Psoas muscle (tissue), 8 donors: ENCODE measurements at regions of chr15 and their contacts with region 1.

Region 1: GRCh38 chr15:55758580-55758986 is 15.6 kb upstream of the PRTG start:
- DNase-seq: no peak
- ATAC-seq: no peak
- H3K4me3 ChIP-seq: no peak overlapping the region
- H3K27ac ChIP-seq: no peak overlapping the region
- H3K4me1 ChIP-seq: no peaks in the 10 kb centered on the region
- H3K27me3 ChIP-seq: no peaks in the 10 kb centered on the region
- CTCF ChIP-seq: no peak

Region 2: DNA sequence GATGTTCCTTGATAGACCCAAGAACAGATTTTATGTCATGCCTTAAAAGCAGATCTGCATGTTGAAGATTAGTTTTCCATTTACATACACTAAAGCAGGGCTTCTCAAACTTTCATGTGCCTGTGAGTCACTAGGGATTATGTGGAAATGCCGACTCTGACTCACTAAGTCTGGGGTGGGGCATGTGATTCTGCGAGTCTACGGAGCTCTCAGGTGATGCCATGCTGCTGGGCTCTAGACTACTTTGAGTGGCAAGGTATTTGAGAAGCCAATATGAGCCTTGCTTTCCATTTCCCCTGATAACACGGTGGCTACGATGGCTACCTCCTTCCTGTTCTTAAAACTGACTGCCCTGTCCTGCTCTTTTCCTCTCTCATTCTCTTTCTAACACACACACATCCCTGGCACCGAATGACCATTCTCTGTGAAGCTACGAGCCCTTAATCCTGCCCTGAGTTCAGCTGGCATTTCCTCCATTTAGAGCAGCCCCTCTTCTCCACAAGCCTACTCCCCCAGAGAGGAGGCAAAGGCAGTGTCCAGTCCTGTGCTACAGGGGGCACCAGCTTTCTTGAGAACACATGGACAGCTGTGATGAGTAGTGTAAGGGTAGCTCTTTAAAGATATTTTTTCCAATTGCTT is 130.7 kb before region 1 on chr15:
- intact Hi-C with region 1: no loop called
- DNase-seq: peak; percentile 22 to 65
- ATAC-seq: peak; percentile 86 to 95 (median 90)
- H3K4me3 ChIP-seq: peak overlapping the region; percentile 26
- H3K27ac ChIP-seq: peak overlapping the region; percentile 85
- H3K4me1 ChIP-seq: peaks cover 27% of the 10 kb centered on the region
- H3K27me3 ChIP-seq: no peaks in the 10 kb centered on the region
- CTCF ChIP-seq: no peak

Region 3: DNA sequence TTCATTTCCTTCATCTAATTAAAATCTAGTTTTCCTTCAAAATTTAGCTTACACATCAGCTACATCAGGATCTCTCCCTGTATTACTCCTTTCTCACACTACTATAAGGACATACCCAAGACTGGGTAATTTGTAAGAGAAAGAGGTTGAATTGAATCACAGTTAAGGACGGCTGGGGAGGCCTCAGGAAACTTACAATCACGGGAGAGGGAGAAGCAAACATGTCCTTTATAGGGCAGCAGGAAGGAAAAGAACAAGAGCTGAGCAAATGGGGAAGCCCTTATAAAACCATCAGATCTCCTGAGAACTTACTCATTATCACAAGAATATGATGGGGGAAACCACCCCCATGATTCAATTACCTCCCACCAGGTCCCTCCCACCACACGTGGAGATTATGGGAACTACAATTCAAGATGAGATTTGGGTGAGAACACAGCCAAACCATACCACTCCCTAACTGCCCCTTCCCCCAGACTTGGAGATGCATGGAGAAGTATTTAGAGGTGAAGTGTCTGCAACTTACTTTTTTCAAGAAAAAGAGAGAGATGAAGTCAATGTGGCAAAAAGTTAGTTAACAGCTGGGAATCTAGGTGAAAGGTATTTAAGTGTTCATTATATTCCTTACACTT is 36.9 kb before region 1 on chr15:
- intact Hi-C with region 1: no loop called
- DNase-seq: no peak
- ATAC-seq: no peak
- H3K4me3 ChIP-seq: no peak overlapping the region
- H3K27ac ChIP-seq: no peak overlapping the region
- H3K4me1 ChIP-seq: no peaks in the 10 kb centered on the region
- H3K27me3 ChIP-seq: no peaks in the 10 kb centered on the region
- CTCF ChIP-seq: no peak

Region 4: GRCh38 chr15:55816017-55816416 is 57.4 kb after region 1 on chr15:
- intact Hi-C with region 1: loop called in 1 of 2 experiments (anchors 10 kb)
- DNase-seq: no peak
- ATAC-seq: no peak
- H3K4me3 ChIP-seq: no peak overlapping the region
- H3K27ac ChIP-seq: no peak overlapping the region
- H3K4me1 ChIP-seq: no peaks in the 10 kb centered on the region
- H3K27me3 ChIP-seq: no peaks in the 10 kb centered on the region
- CTCF ChIP-seq: no peak